ENCODE measurements at regions of chr3 and their contacts with region 1.

Region 1: DNA sequence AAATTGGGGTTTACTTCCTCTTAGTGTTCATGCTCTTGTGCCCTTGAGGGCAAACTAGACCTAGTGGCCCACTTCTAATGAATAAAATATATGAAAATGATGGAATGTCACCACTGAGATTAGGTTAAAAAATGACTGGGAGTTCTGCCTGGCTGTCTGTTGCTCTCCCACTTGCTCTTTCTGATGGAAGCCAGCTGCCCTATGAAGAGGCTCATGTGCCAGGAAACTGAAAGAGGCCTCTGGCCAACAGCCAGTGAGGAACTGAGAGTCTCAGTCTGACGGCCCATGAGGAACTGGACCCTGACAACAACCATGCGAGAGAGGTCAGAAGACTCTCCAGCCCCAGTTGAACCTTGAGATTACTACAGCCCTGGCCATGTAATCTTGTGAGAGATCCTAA is 107.1 kb upstream of the FHIT start:
- H3K4me3 Mint-ChIP-seq: no peak overlapping the region
- H3K27ac Mint-ChIP-seq: peak overlapping the region; percentile 64
- H3K4me1 Mint-ChIP-seq: peaks cover 27% of the 10 kb centered on the region
- H3K27me3 Mint-ChIP-seq: peaks cover 14% of the 10 kb centered on the region

Region 2: DNA sequence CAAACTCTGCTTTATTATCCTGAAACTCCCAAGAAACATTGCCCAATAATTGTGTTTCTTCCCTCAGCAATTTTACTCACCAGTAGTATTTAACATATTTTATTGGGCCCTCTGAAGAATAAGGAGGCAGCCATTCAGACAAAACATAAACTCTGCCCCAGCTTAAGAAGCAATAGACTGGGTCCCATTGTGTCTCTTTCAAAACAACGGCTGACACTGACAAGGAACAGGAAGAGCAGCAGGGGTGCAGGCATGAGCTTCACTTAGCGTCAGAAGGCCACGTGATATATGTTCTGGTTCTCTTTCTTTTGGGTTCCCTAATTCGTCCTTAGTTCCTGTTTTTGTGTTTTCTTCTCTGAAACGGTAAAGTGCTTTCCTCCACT is 349.4 kb before region 1 on chr3:
- intact Hi-C with region 1: loop called (anchors 10 kb)
- H3K4me3 Mint-ChIP-seq: no peak overlapping the region
- H3K27ac Mint-ChIP-seq: peak overlapping the region; percentile 74
- H3K4me1 Mint-ChIP-seq: peaks cover 19% of the 10 kb centered on the region
- H3K27me3 Mint-ChIP-seq: no peaks in the 10 kb centered on the region

Region 3: GRCh38 chr3:61251174-61251972 is 107.0 kb before region 1 on chr3 and contains the start of gene FHIT:
- intact Hi-C with region 1: loop called (anchors 10 kb)
- H3K4me3 Mint-ChIP-seq: peak within 1 kb of the TSS; percentile 79
- H3K27ac Mint-ChIP-seq: peak within 1 kb of the TSS; percentile 85
- H3K4me1 Mint-ChIP-seq: peaks cover 19% of the 10 kb centered on the region
- H3K27me3 Mint-ChIP-seq: no peaks in the 10 kb centered on the region

Measured in dendritic cell treated with granulocyte-macrophage colony-stimulating factor and Interleukin-4, amounts not matched to agents 40 ng/mL and 50 ng/mL, for 4 days (primary cell).